ENCODE measurements at regions of chr7 and their contacts with region 1.

Region 1: GRCh38 chr7:94436018-94436604 is 41.4 kb downstream of the COL1A2 start:
- DNase-seq: no peak
- H3K4me3 ChIP-seq: no peak overlapping the region
- H3K27ac ChIP-seq: no peak overlapping the region
- H3K4me1 ChIP-seq: peaks cover 5% of the 10 kb centered on the region
- H3K27me3 ChIP-seq: peaks cover 11% of the 10 kb centered on the region
- CTCF ChIP-seq: peak; percentile 91

Region 2: GRCh38 chr7:94289071-94289470 is 147.0 kb before region 1 on chr7:
- intact Hi-C with region 1: loop called (anchors 5 kb)
- DNase-seq: peak; percentile 31
- H3K4me3 ChIP-seq: no peak overlapping the region
- H3K27ac ChIP-seq: no peak overlapping the region
- H3K4me1 ChIP-seq: no peaks in the 10 kb centered on the region
- H3K27me3 ChIP-seq: peaks cover 13% of the 10 kb centered on the region
- CTCF ChIP-seq: peak; percentile 85

Region 3: DNA sequence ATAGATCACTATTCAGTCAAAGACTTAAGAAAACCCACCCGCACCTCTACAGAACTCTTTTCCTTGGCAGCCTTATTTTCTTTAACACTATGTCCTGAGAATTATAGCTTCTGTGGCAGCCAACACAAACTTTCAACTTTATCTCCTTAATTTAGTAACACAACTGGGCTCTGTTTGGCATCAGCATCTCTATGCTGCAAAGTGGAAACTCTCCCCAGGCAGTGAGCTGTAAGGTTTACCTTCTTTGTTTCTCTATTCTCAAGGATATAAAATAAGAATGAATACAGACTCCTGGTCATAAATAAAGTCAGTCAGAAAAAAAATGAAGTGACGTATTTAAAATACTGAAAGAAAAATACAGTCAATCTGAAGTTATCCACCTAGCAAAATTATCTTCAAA is 356.2 kb after region 1 on chr7:
- intact Hi-C with region 1: no loop called
- DNase-seq: no peak
- H3K4me3 ChIP-seq: no peak overlapping the region
- H3K27ac ChIP-seq: no peak overlapping the region
- H3K4me1 ChIP-seq: no peaks in the 10 kb centered on the region
- H3K27me3 ChIP-seq: no peaks in the 10 kb centered on the region
- CTCF ChIP-seq: no peak

Measured in left ventricle myocardium inferior (tissue), 1 donor.